ENCODE measurements at regions of chr2 and their contacts with region 1.

Region 1: GRCh38 chr2:105114551-105114950 is 76.7 kb downstream of the MRPS9 start:
- DNase-seq: no peak
- ATAC-seq: peak in 3 of 4 donors; percentile 65 to 79 (median 66)
- H3K4me3 ChIP-seq: no peak overlapping the region
- H3K27ac ChIP-seq: no peak overlapping the region
- H3K4me1 ChIP-seq: no peaks in the 10 kb centered on the region
- H3K27me3 ChIP-seq: no peaks in the 10 kb centered on the region
- CTCF ChIP-seq: peak; percentile 88

Region 2: GRCh38 chr2:105179469-105180372 is 65.2 kb after region 1 on chr2:
- intact Hi-C with region 1: no loop called
- DNase-seq: peak in 1 of 2 donors; percentile 15
- ATAC-seq: peak in 1 of 4 donors; percentile 30
- H3K4me3 ChIP-seq: no peak overlapping the region
- H3K27ac ChIP-seq: no peak overlapping the region
- H3K4me1 ChIP-seq: no peaks in the 10 kb centered on the region
- H3K27me3 ChIP-seq: peaks cover 0 to 32% (median 10%) of the 10 kb centered on the region in 3 donors
- CTCF ChIP-seq: no peak

Region 3: GRCh38 chr2:105235388-105236054 is 121.0 kb after region 1 on chr2:
- intact Hi-C with region 1: loop called (anchors 1 to 2 kb)
- DNase-seq: peak; percentile 60 to 73
- ATAC-seq: peak in 2 of 4 donors; percentile 34 to 39
- H3K4me3 ChIP-seq: no peak overlapping the region
- H3K27ac ChIP-seq: no peak overlapping the region
- H3K4me1 ChIP-seq: no peaks in the 10 kb centered on the region
- H3K27me3 ChIP-seq: no peaks in the 10 kb centered on the region
- CTCF ChIP-seq: peak; percentile 58

Region 4: GRCh38 chr2:105553538-105554196 is 439.1 kb after region 1 on chr2:
- intact Hi-C with region 1: loop called in 1 of 2 experiments (anchors 5 kb)
- DNase-seq: no peak
- ATAC-seq: no peak
- H3K4me3 ChIP-seq: no peak overlapping the region
- H3K27ac ChIP-seq: no peak overlapping the region
- H3K4me1 ChIP-seq: no peaks in the 10 kb centered on the region
- H3K27me3 ChIP-seq: peaks cover 0 to 6% (median 0%) of the 10 kb centered on the region in 3 donors
- CTCF ChIP-seq: no peak